Naive thymus-derived CD4-positive, alpha-beta T cell (primary cell): ENCODE measurements at regions of chr14 and their contacts with region 1.

Region 1: GRCh38 chr14:20413045-20413799 is at the start of gene TEP1:
- DNase-seq: peak; percentile 46 to 75 (median 57)
- ATAC-seq: peak; percentile 80
- H3K4me3 ChIP-seq: peak within 1 kb of the TSS; percentile 71
- H3K4me3 Mint-ChIP-seq: peak within 1 kb of the TSS; percentile 94 to 100 (median 97)
- H3K27ac ChIP-seq: peak within 1 kb of the TSS; percentile 86
- H3K27ac Mint-ChIP-seq: peak within 1 kb of the TSS; percentile 90 to 99 (median 93)
- H3K4me1 ChIP-seq: peaks cover 8 to 17% of the 10 kb centered on the region in 2 donors
- H3K4me1 Mint-ChIP-seq: peaks cover 31 to 59% (median 46%) of the 10 kb centered on the region in 7 donors
- H3K27me3 ChIP-seq: no peaks in the 10 kb centered on the region
- H3K27me3 Mint-ChIP-seq: no peaks in the 10 kb centered on the region
- total RNA-seq, gene TEP1: 23.5 to 56.0 (median 43.6) TPM

Region 2: DNA sequence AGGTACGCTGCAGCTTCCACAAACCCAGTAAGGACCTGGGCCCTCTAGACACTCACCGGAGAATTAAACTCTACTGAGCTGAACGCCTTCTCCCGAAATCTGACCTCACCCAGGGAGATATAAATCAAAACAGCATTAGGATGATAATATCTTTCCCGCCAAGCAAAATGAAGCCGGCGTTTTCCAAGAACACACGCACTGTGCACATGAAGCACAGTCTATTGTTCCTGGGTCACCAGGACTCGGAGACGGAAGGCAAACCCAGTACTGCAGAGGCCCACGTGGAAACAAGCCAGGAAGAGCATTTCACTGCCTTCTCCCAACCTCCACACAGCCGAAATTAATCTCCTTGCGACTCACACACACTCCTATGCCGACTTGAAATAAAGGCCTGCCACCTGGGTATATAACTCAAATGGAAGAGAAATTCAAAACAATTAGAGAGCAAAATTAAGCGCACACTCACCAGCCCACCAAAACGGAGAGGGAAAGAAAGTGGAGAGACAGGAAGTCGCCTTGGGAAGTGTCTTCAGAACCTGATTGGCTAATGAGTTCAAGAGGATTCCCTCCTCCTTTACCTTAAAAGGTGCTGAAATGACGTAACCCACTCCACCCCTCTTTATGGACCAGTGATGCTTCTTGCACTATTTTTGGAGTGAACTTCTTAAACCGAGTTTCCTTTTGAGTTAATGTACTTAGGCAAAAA is 80.3 kb before region 1 on chr14 and contains the start of gene CCNB1IP1:
- CTCF ChIA-PET with region 1: interaction called, 17 read pairs
- POLR2A ChIA-PET with region 1: no interaction called
- intact Hi-C with region 1: loop called in 1 of 2 experiments (anchors 2 kb)
- DNase-seq: peak; percentile 11 to 80 (median 64)
- ATAC-seq: peak; percentile 99
- H3K4me3 ChIP-seq: peak within 1 kb of the TSS; percentile 97
- H3K4me3 Mint-ChIP-seq: peak within 1 kb of the TSS; percentile 85 to 100 (median 96)
- H3K27ac ChIP-seq: peak within 1 kb of the TSS; percentile 62
- H3K27ac Mint-ChIP-seq: peak within 1 kb of the TSS; percentile 67 to 96 (median 92)
- H3K4me1 ChIP-seq: no peaks in the 10 kb centered on the region
- H3K4me1 Mint-ChIP-seq: peaks cover 12 to 49% (median 34%) of the 10 kb centered on the region in 7 donors
- H3K27me3 ChIP-seq: no peaks in the 10 kb centered on the region
- H3K27me3 Mint-ChIP-seq: peaks cover 0 to 4% (median 0%) of the 10 kb centered on the region in 5 donors
- total RNA-seq, gene CCNB1IP1: 19.1 to 29.8 (median 28.7) TPM

Region 3: DNA sequence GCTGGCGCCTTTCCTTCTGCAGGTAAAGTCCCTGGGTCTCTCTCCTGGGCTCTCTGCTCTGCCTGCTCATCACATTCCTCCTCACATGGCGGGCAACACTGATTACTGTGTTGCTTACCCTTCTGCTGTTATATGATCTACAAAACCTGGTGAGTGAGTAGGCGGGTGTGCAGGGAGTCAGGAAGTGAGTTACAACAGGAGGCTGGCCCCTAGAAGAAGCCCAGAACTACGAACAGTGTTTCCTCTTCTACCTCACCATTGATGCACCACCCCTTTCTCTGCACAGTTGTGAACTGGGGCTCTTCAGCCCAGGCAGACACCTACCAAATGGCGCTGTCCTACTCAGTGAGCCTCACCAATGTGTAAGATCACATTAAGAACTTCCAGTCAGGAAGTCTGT is 27.7 kb after region 1 on chr14:
- CTCF ChIA-PET with region 1: interaction called, 7 read pairs
- POLR2A ChIA-PET with region 1: interaction called, 3 read pairs
- intact Hi-C with region 1: loop called in 1 of 2 experiments (anchors 1 kb)
- DNase-seq: peak in 7 of 9 donors; percentile 32 to 71 (median 56)
- ATAC-seq: peak; percentile 99
- H3K4me3 ChIP-seq: no peak overlapping the region
- H3K4me3 Mint-ChIP-seq: peak overlapping the region; percentile 49 to 75 (median 62)
- H3K27ac ChIP-seq: peak overlapping the region; percentile 26
- H3K27ac Mint-ChIP-seq: peak overlapping the region; percentile 60 to 95 (median 86)
- H3K4me1 ChIP-seq: peaks cover 13 to 16% of the 10 kb centered on the region in 2 donors
- H3K4me1 Mint-ChIP-seq: peaks cover 18 to 35% (median 23%) of the 10 kb centered on the region in 7 donors
- H3K27me3 ChIP-seq: no peaks in the 10 kb centered on the region
- H3K27me3 Mint-ChIP-seq: no peaks in the 10 kb centered on the region

Region 4: DNA sequence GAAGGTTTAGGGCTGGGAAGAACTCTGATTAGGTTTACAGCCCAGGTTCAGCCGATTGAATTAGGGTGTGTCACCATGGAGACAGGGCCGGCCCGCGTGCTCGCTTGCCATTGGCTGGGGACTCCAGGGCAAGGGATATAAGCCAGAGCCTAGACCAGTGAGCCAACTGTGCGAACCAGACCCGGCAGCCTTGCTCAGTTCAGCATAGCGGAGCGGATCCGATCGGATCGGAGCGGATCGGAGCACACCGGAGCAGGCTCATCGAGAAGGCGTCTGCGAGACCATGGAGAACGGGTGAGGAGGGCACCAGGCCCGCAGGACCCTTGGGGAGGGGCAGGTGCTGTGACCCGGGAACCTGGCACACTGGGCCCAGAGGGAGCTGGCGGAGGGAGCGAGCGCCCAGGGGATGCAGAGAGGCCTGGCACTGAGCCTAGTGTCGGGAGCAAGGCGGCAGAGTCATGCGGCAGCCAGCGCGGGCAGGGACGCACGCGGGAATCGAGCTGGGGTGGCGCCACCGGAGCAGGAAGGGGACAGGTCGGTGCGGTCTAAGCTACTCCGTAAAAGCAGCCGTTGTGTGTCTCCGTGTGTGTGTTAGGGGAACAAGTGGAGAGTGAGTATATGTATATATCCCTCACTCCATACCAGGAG is 56.1 kb after region 1 on chr14 and contains the start of gene PNP:
- CTCF ChIA-PET with region 1: interaction called, 4 read pairs
- POLR2A ChIA-PET with region 1: interaction called, 3 read pairs
- intact Hi-C with region 1: loop called in 1 of 2 experiments (anchors 1 kb)
- DNase-seq: peak; percentile 74 to 88 (median 84)
- ATAC-seq: peak; percentile 94
- H3K4me3 ChIP-seq: peak within 1 kb of the TSS; percentile 87
- H3K4me3 Mint-ChIP-seq: peak within 1 kb of the TSS; percentile 95 to 100 (median 99)
- H3K27ac ChIP-seq: peak within 1 kb of the TSS; percentile 87
- H3K27ac Mint-ChIP-seq: peak within 1 kb of the TSS; percentile 89 to 98 (median 97)
- H3K4me1 ChIP-seq: peaks cover 13 to 32% of the 10 kb centered on the region in 2 donors
- H3K4me1 Mint-ChIP-seq: peaks cover 40 to 49% (median 43%) of the 10 kb centered on the region in 7 donors
- H3K27me3 ChIP-seq: no peaks in the 10 kb centered on the region
- H3K27me3 Mint-ChIP-seq: peaks cover 0 to 6% (median 0%) of the 10 kb centered on the region in 5 donors
- total RNA-seq, gene PNP: 58.9 to 179 (median 83.0) TPM

Region 5: GRCh38 chr14:20690848-20691523 is 277.8 kb after region 1 on chr14:
- CTCF ChIA-PET with region 1: no interaction called
- POLR2A ChIA-PET with region 1: no interaction called
- intact Hi-C with region 1: loop called in 1 of 2 experiments (anchors 1 kb)
- DNase-seq: peak in 7 of 9 donors; percentile 48 to 69 (median 63)
- ATAC-seq: peak; percentile 97
- H3K4me3 ChIP-seq: no peak overlapping the region
- H3K4me3 Mint-ChIP-seq: no peak overlapping the region
- H3K27ac ChIP-seq: no peak overlapping the region
- H3K27ac Mint-ChIP-seq: peak overlapping the region in 1 of 9 donors; percentile 32
- H3K4me1 ChIP-seq: no peaks in the 10 kb centered on the region
- H3K4me1 Mint-ChIP-seq: peaks cover 0 to 16% (median 6%) of the 10 kb centered on the region in 7 donors
- H3K27me3 ChIP-seq: no peaks in the 10 kb centered on the region
- H3K27me3 Mint-ChIP-seq: no peaks in the 10 kb centered on the region